Activated CD8-positive, alpha-beta T cell treated with anti-CD3 and anti-CD28 coated beads, Interleukin-2, amount 10 ng/mL, durations not matched to agents 7 days and 5 days (primary cell): ENCODE measurements at regions of chr17 and their contacts with region 1.

Region 1: GRCh38 chr17:3738562-3739295 is 15.0 kb downstream of the HASPIN start:
- DNase-seq: peak; percentile 73
- ATAC-seq: peak; percentile 71
- H3K4me3 Mint-ChIP-seq: no peak overlapping the region
- H3K27ac Mint-ChIP-seq: peak overlapping the region; percentile 69
- H3K4me1 Mint-ChIP-seq: peaks cover 50% of the 10 kb centered on the region
- H3K27me3 Mint-ChIP-seq: peaks cover 4% of the 10 kb centered on the region

Region 2: DNA sequence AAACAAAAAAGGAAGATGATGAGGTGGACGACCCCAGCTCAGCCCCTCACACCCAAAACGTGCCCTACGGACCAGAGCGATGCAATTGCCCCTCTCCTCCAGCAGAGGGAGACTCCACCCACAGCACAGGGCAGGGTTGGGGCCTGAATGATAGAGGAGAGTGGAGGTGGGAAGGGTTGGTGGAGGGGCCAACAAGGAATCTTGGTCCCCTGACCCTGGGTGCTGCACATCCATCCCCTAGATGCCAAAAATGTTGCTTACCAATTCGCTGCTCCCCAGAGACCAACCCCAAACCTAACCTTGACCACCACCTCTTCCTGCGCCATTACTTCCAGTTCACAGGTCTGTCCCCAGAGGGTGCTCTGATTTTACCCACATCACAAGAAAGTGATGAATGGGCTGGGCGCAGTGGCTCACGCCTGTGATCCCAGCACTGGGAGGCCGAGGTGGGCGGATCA is 55.6 kb before region 1 on chr17:
- CTCF ChIA-PET with region 1: interaction called, 13 read pairs
- POLR2A ChIA-PET with region 1: no interaction called
- DNase-seq: peak; percentile 74
- ATAC-seq: peak; percentile 90
- H3K4me3 Mint-ChIP-seq: no peak overlapping the region
- H3K27ac Mint-ChIP-seq: no peak overlapping the region
- H3K4me1 Mint-ChIP-seq: peaks cover 25% of the 10 kb centered on the region
- H3K27me3 Mint-ChIP-seq: no peaks in the 10 kb centered on the region

Region 3: DNA sequence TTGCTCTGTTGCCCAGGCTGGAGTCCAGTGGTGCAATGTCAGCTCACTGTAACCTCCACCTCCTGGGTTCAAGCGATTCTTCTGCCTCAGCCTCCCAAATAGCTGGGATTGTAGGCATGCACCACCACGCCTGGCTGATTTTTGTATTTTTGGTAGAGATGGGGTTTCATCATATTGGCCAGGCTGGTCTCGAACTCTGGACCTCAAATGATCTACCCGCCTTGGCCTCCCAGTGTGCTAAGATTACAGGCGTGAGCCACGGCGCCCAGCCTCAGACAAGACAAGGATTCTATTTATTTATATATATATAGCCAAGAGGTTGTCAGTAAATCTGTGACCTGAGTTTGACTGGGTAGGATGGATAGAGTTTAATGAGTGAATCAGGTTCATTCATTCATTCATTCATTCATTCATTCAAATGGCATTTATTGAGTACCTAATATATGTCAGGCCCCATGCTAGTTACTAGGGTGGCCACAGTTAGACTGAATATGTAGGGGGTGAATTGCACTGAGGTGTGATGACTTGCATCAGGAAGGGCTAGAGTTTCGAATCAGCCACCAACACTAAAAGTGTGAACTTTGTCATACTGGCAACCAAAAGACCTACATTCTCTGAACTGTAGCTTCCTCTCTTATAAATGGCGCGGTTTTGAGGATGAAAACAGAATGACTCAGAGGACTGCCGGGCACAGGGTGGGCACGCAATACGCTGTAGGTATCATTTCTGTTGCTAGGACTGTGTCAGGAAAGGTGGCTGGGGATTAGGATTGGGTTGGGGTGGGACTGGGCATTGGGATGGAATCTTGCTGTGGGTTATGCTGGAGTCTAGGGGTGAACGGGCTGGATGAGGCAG is 24.4 kb after region 1 on chr17:
- CTCF ChIA-PET with region 1: interaction called, 34 read pairs
- POLR2A ChIA-PET with region 1: interaction called, 3 read pairs
- DNase-seq: peak; percentile 69
- ATAC-seq: peak; percentile 50
- H3K4me3 Mint-ChIP-seq: peak overlapping the region; percentile 59
- H3K27ac Mint-ChIP-seq: peak overlapping the region; percentile 90
- H3K4me1 Mint-ChIP-seq: peaks cover 59% of the 10 kb centered on the region
- H3K27me3 Mint-ChIP-seq: peaks cover 2% of the 10 kb centered on the region

Region 4: GRCh38 chr17:3796110-3796821 is 57.5 kb after region 1 on chr17:
- CTCF ChIA-PET with region 1: interaction called, 46 read pairs
- POLR2A ChIA-PET with region 1: interaction called, 3 read pairs
- DNase-seq: peak; percentile 96
- ATAC-seq: peak; percentile 81
- H3K4me3 Mint-ChIP-seq: peak overlapping the region; percentile 34
- H3K27ac Mint-ChIP-seq: peak overlapping the region; percentile 70
- H3K4me1 Mint-ChIP-seq: peaks cover 82% of the 10 kb centered on the region
- H3K27me3 Mint-ChIP-seq: peaks cover 6% of the 10 kb centered on the region

Region 5: DNA sequence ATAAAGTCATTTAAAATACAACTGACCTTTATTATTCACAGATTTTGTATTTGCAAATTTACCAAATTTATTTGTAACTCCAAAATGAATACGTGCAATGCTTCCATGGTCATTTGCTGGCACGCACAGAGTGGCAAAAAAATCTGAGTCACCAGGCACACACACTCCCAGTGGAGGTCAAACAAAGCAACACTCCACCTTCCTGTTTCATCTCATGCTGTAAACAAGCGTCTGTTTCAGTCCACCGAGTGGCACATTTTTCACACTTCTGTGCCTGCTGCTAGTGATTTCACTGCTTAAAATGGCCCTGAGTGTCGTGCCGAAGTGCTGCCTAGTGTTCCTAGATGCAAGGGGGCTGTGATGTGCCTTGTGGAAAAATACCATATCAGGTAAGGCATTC is 80.1 kb after region 1 on chr17:
- CTCF ChIA-PET with region 1: interaction called, 36 read pairs
- POLR2A ChIA-PET with region 1: no interaction called
- DNase-seq: no peak
- ATAC-seq: no peak
- H3K4me3 Mint-ChIP-seq: no peak overlapping the region
- H3K27ac Mint-ChIP-seq: no peak overlapping the region
- H3K4me1 Mint-ChIP-seq: no peaks in the 10 kb centered on the region
- H3K27me3 Mint-ChIP-seq: no peaks in the 10 kb centered on the region

Region 6: DNA sequence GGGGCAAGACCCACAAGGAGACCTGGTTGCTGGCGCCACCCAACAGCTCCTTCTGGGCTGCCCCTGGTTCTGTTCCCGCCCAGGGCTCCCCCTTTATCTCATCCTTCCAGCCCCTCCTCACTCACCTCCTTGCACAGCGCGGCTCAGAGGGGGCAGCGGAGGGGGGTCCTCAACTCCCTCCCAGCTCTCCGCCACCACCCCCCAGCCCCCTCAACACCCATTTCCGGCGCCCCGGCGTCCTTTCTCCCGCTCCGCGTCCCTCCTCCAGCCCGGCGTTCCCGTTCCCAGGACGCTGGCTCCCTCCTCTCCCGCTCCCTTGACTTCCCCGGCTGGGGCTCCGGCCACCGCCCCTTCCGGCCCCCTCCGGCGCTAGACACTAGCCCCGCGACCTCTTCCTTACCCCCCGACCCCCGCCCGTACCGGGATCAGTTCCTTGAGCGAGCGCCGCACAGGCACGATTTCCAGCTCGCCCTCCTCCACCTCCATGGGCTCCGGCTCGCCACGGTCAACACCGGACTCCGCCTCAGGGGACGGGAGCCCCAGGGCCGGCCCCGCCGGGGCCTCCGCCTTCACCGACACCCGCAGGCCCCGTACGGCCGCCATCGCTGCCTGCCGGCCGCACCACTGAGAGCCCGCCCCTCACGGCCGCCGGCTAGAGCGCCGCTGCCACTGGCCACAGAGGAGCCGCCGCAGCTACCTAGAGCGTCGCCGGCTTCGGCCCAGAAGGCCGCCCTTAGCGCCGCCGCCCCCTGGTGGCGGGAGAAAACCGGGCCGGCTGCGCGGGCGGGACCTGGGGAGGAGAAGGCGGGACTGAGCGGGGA is 107.1 kb after region 1 on chr17 and contains the start of gene NCBP3:
- CTCF ChIA-PET with region 1: interaction called, 142 read pairs
- POLR2A ChIA-PET with region 1: interaction called, 8 read pairs
- DNase-seq: peak; percentile 90
- ATAC-seq: peak; percentile 97
- H3K4me3 Mint-ChIP-seq: peak within 1 kb of the TSS; percentile 94
- H3K27ac Mint-ChIP-seq: peak within 1 kb of the TSS; percentile 93
- H3K4me1 Mint-ChIP-seq: peaks cover 30% of the 10 kb centered on the region
- H3K27me3 Mint-ChIP-seq: peaks cover 5% of the 10 kb centered on the region
- total RNA-seq, gene NCBP3: 39.1 to 42.6 TPM

Region 7: DNA sequence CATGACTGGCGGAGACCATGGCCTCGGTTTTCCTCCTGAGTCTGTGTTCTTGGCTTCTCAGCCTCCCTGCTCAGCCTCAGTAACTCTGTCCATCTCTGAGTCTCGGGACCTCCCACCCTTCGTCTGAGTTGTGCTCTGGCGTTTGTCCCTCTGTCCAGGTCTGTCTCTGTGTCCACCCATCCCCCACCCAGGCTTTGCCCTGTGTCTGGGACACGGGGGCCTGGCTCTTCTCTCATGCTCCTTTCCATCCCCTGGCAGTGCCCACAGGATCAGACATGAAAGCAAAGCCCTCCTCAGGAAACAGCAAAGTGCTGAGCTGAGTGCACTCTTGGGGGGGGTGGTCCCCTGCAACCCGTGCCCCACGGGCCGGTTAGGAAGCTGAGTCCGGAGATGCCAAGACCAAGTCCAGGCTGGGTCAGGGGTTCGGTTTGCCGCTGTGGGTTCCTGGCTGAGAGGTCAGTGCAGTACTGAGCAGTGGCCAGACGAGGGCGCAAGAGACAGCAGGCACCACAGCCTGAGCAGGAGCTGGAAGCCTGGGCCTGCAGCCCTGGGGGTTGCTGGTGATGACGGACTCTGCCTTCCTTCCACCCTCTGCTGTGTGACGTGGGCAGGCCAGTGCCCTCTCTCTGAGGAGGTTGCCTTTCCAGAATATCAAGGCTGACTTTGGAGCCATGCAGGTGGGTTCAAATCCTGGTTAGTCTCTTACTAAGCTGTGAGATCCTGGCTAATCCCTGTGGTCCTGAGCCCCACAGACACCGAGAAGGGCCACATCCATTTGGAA is 175.0 kb after region 1 on chr17:
- CTCF ChIA-PET with region 1: interaction called, 21 read pairs
- POLR2A ChIA-PET with region 1: no interaction called
- DNase-seq: peak; percentile 88
- ATAC-seq: peak; percentile 59
- H3K4me3 Mint-ChIP-seq: no peak overlapping the region
- H3K27ac Mint-ChIP-seq: peak overlapping the region; percentile 78
- H3K4me1 Mint-ChIP-seq: peaks cover 70% of the 10 kb centered on the region
- H3K27me3 Mint-ChIP-seq: no peaks in the 10 kb centered on the region